GM12878 (cell line): ENCODE measurements at regions of chr14 and their contacts with region 1.

Region 1: GRCh38 chr14:89936658-89937185 is 17.8 kb downstream of the EFCAB11 start:
- DNase-seq: no peak
- ATAC-seq: no peak
- H3K4me3 ChIP-seq: no peak overlapping the region
- H3K27ac ChIP-seq: no peak overlapping the region
- H3K4me1 ChIP-seq: no peaks in the 10 kb centered on the region
- H3K27me3 ChIP-seq: no peaks in the 10 kb centered on the region
- CTCF ChIP-seq: no peak; a peak in 1 of 6 replicates
- EP300 ChIP-seq: no peak
- POLR2A ChIP-seq: no peak
- RAD21 ChIP-seq: no peak

Region 2: DNA sequence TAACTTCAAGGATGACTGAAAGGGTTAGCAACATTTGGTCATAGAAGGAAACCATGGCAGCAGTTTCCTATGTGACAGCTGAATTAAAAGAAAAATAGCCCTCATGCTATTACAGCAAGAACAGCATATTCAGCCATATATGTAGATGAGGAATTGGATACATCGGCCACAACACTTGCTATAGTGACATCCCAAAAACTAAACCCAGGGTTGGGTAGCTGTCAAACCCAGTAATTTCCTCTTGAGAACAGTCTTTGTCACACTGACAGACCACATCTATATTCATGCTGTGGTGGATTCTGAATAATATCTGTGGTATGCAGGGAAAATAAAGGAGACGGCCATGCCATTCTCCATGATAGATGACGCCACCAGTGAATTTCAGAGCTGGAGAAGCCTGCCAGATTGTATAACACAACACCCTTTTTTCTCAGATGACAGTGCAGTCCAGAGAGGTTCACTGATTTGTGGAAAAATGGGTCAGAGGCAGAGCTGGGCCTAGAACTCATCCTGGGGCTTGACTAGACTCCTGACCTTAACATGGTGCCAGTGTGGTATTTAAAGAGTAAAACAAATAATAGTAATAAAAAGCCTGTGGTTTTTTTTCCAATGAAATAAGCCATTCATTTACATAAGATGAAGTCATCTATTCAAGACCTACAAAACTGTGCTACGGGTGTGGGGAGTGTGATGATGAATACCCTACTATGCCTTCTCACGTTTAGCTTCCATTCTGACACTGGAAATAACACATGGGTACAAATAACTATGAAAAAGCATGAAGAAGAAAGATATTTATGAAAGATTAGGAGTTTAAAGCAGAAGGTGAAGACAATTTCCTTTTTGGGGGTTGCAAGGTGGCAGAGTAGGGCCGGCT is 14.5 kb before region 1 on chr14:
- CTCF ChIA-PET with region 1: interaction called, 10 read pairs
- POLR2A ChIA-PET with region 1: no interaction called
- RAD21 ChIA-PET with region 1: no interaction called
- SMC1A ChIA-PET with region 1: no interaction called
- in situ Hi-C with region 1: no loop called
- intact Hi-C with region 1: no loop called
- DNase-seq: no peak
- ATAC-seq: no peak
- H3K4me3 ChIP-seq: no peak overlapping the region
- H3K27ac ChIP-seq: no peak overlapping the region
- H3K4me1 ChIP-seq: no peaks in the 10 kb centered on the region
- H3K27me3 ChIP-seq: no peaks in the 10 kb centered on the region
- CTCF ChIP-seq: no peak
- EP300 ChIP-seq: no peak
- POLR2A ChIP-seq: no peak
- RAD21 ChIP-seq: no peak

Region 3: DNA sequence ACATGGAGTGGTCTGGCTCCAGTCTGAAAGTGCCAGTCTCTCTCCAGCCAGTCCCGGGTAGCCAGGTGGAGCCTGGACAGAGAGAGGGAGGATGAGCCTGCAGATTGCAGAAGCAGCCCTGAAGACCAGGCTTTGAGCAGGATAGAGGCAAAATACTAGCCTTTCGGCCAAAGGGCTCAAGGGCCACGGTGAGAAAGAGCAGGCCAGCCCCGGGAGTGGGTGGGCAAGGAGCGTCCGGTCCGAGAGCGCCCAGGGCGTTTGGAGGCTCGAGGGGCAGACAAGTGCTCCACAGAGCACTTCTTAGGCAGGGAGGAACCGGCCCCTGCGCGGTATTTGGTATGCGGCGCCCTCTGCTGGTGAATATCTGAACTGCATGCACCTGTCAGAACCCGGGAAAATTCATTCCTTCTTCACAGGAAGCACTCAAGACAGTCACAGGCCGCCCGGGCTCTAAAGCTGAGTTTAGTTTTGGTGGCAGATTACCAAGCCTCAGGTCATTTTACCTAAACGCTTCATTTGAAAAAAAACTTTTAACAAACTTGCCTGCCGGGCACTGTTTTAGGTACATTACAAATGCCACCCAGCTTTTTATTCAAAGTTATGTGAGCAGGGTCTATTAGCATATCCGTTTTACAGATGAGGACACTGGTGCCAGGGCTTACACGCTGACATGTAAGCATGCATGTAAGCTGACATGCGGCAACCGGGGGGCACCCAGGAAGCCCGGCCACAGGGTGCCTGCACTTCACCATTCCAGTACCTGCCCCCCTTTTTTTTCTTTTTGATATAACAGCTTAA is 298.7 kb after region 1 on chr14:
- CTCF ChIA-PET with region 1: interaction called, 62 read pairs
- POLR2A ChIA-PET with region 1: no interaction called
- RAD21 ChIA-PET with region 1: interaction called, 11 read pairs
- SMC1A ChIA-PET with region 1: interaction called, 8 read pairs
- in situ Hi-C with region 1: loop called (anchors 5 kb)
- intact Hi-C with region 1: loop called (anchors 1 kb)
- DNase-seq: no peak
- ATAC-seq: peak; percentile 91
- H3K4me3 ChIP-seq: no peak overlapping the region
- H3K27ac ChIP-seq: no peak overlapping the region
- H3K4me1 ChIP-seq: no peaks in the 10 kb centered on the region
- H3K27me3 ChIP-seq: no peaks in the 10 kb centered on the region
- CTCF ChIP-seq: peak; percentile 83 to 96 (median 89)
- EP300 ChIP-seq: no peak
- POLR2A ChIP-seq: no peak
- RAD21 ChIP-seq: peak; percentile 78